Calu3 (cell line): ENCODE measurements at regions of chr14 and their contacts with region 1.

Region 1: DNA sequence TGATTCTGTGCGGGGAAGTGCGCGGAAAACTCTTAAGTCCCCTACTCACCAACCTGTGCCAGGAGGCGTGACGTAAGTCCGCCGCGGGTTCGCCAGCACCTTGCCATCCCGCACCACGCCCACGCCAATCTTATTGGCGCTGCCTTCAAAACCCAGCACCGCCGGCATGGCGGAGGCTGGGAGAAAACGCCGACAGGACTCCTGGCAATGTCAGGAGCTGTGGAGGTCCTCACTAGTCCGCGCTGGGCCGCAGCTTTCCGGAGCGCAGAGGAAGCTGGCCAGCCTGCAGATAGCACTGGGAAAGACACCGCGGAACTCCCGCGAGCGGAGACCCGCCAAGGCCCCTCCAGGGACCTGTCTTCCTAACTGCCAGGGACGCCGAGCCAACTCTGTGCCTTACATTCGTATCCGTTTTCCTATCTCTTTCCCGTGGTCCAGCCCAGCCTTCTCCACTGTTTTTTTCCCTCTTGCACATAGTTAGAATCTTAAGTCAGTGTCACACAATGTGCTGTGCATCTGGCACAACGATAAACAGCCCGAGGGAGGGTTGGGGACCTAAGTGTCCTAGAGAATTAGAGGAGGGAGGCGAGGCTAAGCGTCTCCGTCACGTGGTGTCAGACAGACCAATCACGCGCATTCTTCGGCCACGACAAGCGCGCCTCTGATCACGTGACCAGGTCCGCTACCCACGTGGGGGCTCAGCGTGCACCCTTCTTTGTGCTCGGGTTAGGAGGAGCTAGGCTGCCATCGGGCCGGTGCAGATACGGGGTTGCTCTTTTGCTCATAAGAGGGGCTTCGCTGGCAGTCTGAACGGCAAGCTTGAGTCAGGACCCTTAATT is at the starts of genes APEX1 and OSGEP:
- DNase-seq: peak; percentile 96
- H3K4me3 Mint-ChIP-seq: no peak within 1 kb of the TSS
- H3K27ac Mint-ChIP-seq: no peak within 1 kb of the TSS
- H3K4me1 Mint-ChIP-seq: peaks cover 4% of the 10 kb centered on the region
- H3K27me3 Mint-ChIP-seq: no peaks in the 10 kb centered on the region
- CTCF ChIP-seq: no peak
- total RNA-seq, gene APEX1: 205 TPM in 2 replicates
- total RNA-seq, gene OSGEP: 46.2 and 54.3 TPM in 2 replicates

Region 2: DNA sequence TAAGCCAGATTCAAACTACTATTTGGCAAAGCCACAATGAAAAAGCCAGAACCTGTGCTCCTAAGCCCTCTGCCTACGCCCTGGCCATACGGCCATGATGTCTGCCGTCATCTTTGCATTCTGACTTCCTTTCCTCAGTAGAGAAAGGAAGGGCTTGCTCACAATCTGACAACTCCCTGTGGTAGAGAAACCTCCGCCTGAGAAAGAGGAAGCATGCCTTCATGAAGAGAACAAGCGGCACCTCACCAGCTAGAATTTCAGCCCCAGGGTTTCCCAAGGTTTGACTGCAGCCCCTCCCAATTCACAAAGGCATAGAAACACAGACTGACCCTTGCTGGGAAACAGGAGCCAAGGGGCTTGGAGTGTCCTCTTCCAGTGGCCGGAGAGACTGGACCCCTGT is 67.2 kb before region 1 on chr14:
- CTCF ChIA-PET with region 1: no interaction called
- intact Hi-C with region 1: no loop called
- DNase-seq: no peak
- H3K4me3 Mint-ChIP-seq: no peak overlapping the region
- H3K27ac Mint-ChIP-seq: no peak overlapping the region
- H3K4me1 Mint-ChIP-seq: no peaks in the 10 kb centered on the region
- H3K27me3 Mint-ChIP-seq: no peaks in the 10 kb centered on the region
- CTCF ChIP-seq: no peak

Region 3: GRCh38 chr14:20415782-20416206 is 38.9 kb before region 1 on chr14:
- CTCF ChIA-PET with region 1: interaction called, 14 read pairs
- intact Hi-C with region 1: loop called (anchors 2 kb)
- DNase-seq: peak; percentile 55
- H3K4me3 Mint-ChIP-seq: no peak overlapping the region
- H3K27ac Mint-ChIP-seq: peak overlapping the region; percentile 18
- H3K4me1 Mint-ChIP-seq: peaks cover 36% of the 10 kb centered on the region
- H3K27me3 Mint-ChIP-seq: no peaks in the 10 kb centered on the region
- CTCF ChIP-seq: peak; percentile 30

Region 4: GRCh38 chr14:20434701-20435581 is 19.8 kb before region 1 on chr14:
- CTCF ChIA-PET with region 1: no interaction called
- intact Hi-C with region 1: loop called (anchors 1 kb)
- DNase-seq: no peak
- H3K4me3 Mint-ChIP-seq: no peak overlapping the region
- H3K27ac Mint-ChIP-seq: no peak overlapping the region
- H3K4me1 Mint-ChIP-seq: no peaks in the 10 kb centered on the region
- H3K27me3 Mint-ChIP-seq: peaks cover 15% of the 10 kb centered on the region
- CTCF ChIP-seq: no peak